ENCODE measurements at regions of chr15 and their contacts with region 1.

Region 1: GRCh38 chr15:51622604-51623370 is at the start of gene DMXL2:
- DNase-seq: peak; percentile 76 to 93 (median 87)
- ATAC-seq: peak; percentile 72
- H3K4me3 ChIP-seq: peak within 1 kb of the TSS; percentile 72
- H3K27ac ChIP-seq: peak within 1 kb of the TSS; percentile 63
- H3K4me1 ChIP-seq: peaks cover 16 to 18% of the 10 kb centered on the region in 2 experiments; a peak in 3 of 5 replicates
- H3K27me3 ChIP-seq: no peaks in the 10 kb centered on the region
- CTCF ChIP-seq: no peak
- EP300 ChIP-seq: no peak
- POLR2A ChIP-seq: peak; percentile 67
- RAD21 ChIP-seq: 0 out of 4 replicates have a peak, but pooled peaks of 1 of the 2 experiments have one; percentile 2
- polyA plus RNA-seq, gene DMXL2: 9.3 to 16.2 TPM

Region 2: DNA sequence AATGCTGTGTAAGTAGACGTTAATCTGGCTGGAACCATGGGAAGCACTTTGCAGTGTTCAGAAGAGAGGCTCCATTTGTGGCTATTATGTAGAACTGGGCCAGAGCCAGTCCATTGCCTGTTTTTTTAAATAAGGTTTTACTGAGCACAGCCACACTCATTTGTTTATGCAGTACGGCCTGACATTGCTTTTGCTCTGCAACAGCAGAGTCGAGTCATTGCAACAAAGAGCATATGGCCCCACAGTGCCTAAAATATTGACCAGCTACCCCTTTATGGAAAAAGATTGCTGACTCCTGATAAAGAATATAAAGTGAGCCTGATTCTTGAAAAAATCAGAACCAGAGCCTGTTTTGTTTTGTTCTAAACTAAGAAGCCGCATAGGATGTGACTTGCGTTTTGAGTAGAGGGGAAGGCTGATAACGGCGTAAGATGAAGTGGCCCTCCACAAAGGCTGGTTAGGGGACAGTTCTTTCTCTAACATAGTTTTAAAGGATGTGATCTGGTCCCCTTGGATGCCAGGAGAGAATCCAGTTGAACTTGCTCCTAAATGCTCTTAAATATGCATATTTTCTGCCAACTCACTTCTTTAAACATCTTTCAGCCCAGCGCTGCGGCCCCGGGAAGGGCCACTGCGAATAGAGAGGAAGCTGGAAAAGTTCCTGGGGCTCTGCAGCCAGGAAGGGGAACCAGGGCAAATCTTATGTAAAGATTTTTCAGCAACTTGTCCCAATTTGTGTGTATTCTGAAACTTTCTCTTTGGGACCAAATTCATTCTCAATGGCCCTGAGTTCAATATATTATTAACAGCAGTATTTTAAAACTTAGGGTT is 216.9 kb before region 1 on chr15:
- CTCF ChIA-PET with region 1: no interaction called
- POLR2A ChIA-PET with region 1: no interaction called
- in situ Hi-C with region 1: no loop called
- intact Hi-C with region 1: no loop called
- DNase-seq: no peak
- ATAC-seq: no peak
- H3K4me3 ChIP-seq: no peak overlapping the region
- H3K27ac ChIP-seq: no peak overlapping the region
- H3K4me1 ChIP-seq: no peaks in the 10 kb centered on the region
- H3K27me3 ChIP-seq: peaks cover 15 to 27% of the 10 kb centered on the region in 2 experiments
- CTCF ChIP-seq: no peak
- EP300 ChIP-seq: no peak
- POLR2A ChIP-seq: no peak
- RAD21 ChIP-seq: no peak

Region 3: GRCh38 chr15:51460796-51461195 is 162.0 kb before region 1 on chr15:
- CTCF ChIA-PET with region 1: no interaction called
- POLR2A ChIA-PET with region 1: no interaction called
- in situ Hi-C with region 1: no loop called
- intact Hi-C with region 1: no loop called
- DNase-seq: no peak
- ATAC-seq: no peak
- H3K4me3 ChIP-seq: no peak overlapping the region
- H3K27ac ChIP-seq: no peak overlapping the region
- H3K4me1 ChIP-seq: no peaks in the 10 kb centered on the region
- H3K27me3 ChIP-seq: no peaks in the 10 kb centered on the region
- CTCF ChIP-seq: no peak
- EP300 ChIP-seq: no peak
- POLR2A ChIP-seq: no peak
- RAD21 ChIP-seq: no peak

Region 4: DNA sequence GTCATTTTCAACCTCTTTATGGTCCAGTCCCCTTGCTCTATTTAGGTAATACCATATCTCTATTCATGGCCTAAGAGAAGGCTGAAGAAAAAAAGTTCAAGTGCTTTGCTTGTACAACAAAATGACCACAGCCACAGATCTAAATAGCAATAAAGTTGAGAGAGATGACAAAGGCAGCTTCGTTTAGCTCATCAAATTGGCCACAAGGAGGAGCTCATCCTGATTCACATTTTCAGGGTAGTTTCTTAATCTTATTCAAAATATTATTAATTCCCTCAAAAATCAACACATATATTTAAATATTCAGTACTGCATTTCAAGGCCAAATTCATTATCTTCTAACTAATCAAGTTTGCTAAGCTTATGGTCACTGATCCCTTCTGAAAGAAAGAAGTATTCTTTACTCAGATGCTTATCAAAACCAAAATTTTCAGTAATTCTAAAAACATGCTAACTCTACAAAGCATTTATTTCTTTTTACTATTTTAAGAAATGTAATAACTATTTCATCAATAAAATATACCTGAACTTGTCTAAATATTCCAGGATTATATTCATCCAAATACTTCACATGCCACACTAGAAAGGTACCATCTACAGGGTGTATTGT is 85.7 kb before region 1 on chr15:
- CTCF ChIA-PET with region 1: no interaction called
- POLR2A ChIA-PET with region 1: no interaction called
- in situ Hi-C with region 1: no loop called
- intact Hi-C with region 1: loop called (anchors 10 kb)
- DNase-seq: peak; percentile 21 to 50 (median 38)
- ATAC-seq: peak; percentile 75; the same call in 2 of the 3 replicates
- H3K4me3 ChIP-seq: no peak overlapping the region
- H3K27ac ChIP-seq: no peak overlapping the region
- H3K4me1 ChIP-seq: no peaks in the 10 kb centered on the region
- H3K27me3 ChIP-seq: no peaks in the 10 kb centered on the region
- CTCF ChIP-seq: peak; percentile 34 to 64 (median 56); a peak in 5 of 6 replicates
- EP300 ChIP-seq: no peak
- POLR2A ChIP-seq: no peak
- RAD21 ChIP-seq: peak; percentile 37 to 63

Region 5: DNA sequence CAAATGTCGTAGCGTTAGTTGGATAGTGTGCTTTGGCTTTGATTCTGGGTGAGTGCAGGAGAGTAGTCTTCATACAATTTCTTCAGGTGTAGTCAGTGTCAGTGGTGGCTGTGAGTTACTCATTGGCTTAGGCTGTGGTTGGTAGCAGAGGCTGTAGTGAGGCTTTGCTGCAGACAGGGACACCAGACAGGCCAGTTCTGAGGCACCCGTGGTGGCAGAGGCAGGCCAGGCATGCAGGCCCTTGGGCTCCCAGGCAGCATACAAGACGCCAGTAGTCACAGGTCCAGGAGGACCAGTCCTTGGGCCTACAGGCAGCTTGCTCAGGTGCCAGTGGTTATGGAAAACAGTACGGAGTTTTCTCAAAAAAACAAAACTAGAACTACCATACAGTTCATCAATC is 61.5 kb before region 1 on chr15:
- CTCF ChIA-PET with region 1: no interaction called
- POLR2A ChIA-PET with region 1: no interaction called
- in situ Hi-C with region 1: no loop called
- intact Hi-C with region 1: loop called (anchors 5 kb)
- DNase-seq: no peak
- ATAC-seq: peak; percentile 55
- H3K4me3 ChIP-seq: no peak overlapping the region
- H3K27ac ChIP-seq: no peak overlapping the region
- H3K4me1 ChIP-seq: no peaks in the 10 kb centered on the region
- H3K27me3 ChIP-seq: no peaks in the 10 kb centered on the region
- CTCF ChIP-seq: no peak
- EP300 ChIP-seq: no peak
- POLR2A ChIP-seq: no peak
- RAD21 ChIP-seq: no peak

Region 6: DNA sequence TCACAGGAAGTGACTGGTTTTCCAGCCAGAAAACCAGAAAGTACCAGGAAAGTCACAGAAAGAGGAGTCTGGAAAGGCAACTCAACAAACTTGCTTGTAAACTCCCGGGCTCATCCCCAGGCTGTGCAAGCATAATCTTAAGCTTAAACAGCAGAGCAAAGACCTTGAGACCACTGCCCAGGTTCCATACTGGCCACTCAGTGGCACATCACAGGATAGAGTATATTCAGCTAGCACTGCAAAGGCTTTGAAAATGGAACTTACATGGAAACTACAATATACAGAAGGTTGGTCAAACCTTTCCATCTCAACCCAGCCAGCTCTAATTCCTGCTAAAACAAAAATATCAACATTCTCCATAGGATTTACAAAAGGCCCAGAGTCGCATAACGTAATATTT is 20.3 kb before region 1 on chr15:
- CTCF ChIA-PET with region 1: no interaction called
- POLR2A ChIA-PET with region 1: interaction called, 33 read pairs
- in situ Hi-C with region 1: no loop called
- intact Hi-C with region 1: loop called (anchors 2 kb)
- DNase-seq: peak in 1 of 4 experiments; percentile 48
- ATAC-seq: peak; percentile 85
- H3K4me3 ChIP-seq: peak overlapping the region; percentile 39
- H3K27ac ChIP-seq: peak overlapping the region; percentile 62
- H3K4me1 ChIP-seq: peaks cover 0 to 23% of the 10 kb centered on the region in 2 experiments; a peak in 3 of 5 replicates
- H3K27me3 ChIP-seq: no peaks in the 10 kb centered on the region
- CTCF ChIP-seq: no peak
- EP300 ChIP-seq: no peak
- POLR2A ChIP-seq: no peak
- RAD21 ChIP-seq: no peak

Region 7: DNA sequence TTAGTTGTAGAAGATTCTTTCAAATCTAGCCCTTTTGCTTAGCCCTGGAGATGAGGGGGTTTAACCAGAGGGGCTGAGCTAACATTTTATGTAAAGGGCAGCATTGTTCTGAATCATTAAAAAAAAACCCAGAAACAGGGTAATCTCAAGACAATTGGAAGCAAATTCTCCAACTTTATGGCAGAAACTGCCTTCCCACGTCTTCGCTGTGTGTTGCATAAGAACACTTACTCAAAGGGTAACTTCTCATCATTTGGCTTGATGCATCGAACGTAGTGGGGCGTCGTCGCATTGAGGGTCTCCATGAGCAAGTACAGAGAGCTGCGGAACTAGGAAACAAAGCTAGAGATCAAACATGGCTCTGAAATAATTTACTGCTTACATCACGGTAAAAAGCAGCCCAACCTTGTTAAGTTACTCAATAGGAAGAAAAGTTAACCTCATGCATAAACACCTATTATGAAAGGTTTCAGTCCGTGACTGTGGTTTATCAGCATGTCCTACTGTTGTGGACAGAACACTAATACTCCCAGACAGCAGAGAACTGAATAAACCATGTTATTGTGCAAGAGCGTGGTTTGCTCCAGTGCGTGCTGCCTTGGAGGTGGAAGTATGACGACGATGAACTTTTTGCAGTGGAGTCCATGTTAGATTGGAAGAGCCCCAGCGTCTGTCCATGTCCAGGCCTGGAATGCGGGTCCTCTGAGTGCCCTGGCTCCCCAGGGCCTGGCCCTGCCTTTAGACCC is 624.1 kb after region 1 on chr15:
- CTCF ChIA-PET with region 1: no interaction called
- POLR2A ChIA-PET with region 1: no interaction called
- in situ Hi-C with region 1: no loop called
- intact Hi-C with region 1: no loop called
- DNase-seq: no peak
- ATAC-seq: no peak
- H3K4me3 ChIP-seq: no peak overlapping the region
- H3K27ac ChIP-seq: no peak overlapping the region
- H3K4me1 ChIP-seq: no peaks in the 10 kb centered on the region
- H3K27me3 ChIP-seq: peaks cover 36 to 55% of the 10 kb centered on the region in 2 experiments
- CTCF ChIP-seq: no peak
- EP300 ChIP-seq: no peak
- POLR2A ChIP-seq: no peak
- RAD21 ChIP-seq: no peak